MCF 10A (cell line): ENCODE measurements at regions of chr2 and their contacts with region 1.

Region 1: DNA sequence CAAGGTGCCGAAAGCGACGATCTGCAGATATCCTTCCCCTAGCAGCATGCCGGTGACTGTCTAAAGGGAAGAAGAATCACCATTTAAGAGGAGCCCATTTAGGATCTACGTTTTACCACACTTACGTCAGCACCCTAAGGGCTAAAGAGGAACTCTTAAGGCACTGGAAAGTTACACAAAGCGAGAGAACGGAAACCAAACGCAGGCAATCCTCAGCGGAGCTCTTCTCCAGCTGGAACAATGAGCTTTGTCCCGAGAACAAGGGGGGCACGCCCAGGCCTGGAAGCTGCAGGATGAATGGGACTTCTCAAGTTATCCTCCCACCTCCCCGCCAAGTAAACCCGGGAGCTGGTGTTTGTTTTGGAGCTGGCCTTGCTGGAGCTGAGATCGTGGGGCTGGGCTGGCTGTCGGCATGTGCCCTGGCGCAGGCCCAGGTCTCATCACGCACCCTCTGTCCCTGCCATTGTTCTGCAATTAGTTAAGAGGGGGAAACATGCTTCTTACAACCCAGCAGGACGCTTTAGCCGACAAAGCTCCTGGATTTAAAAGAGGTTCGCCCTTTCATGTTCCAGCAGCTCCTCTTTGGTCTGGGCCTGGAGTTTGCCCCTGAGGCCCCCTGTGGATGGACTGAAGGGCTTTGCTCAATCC is 36.4 kb downstream of the PXDN start:
- DNase-seq: peak; percentile 98
- H3K4me3 Mint-ChIP-seq: peak overlapping the region; percentile 73
- H3K27ac Mint-ChIP-seq: peak overlapping the region; percentile 96
- H3K4me1 Mint-ChIP-seq: peaks cover 18% of the 10 kb centered on the region
- H3K27me3 Mint-ChIP-seq: no peaks in the 10 kb centered on the region
- CTCF ChIP-seq: no peak

Region 2: GRCh38 chr2:1721706-1722646 is 14.1 kb after region 1 on chr2:
- CTCF ChIA-PET with region 1: interaction called, 11 read pairs
- POLR2A ChIA-PET with region 1: interaction called, 34 read pairs
- intact Hi-C with region 1: no loop called
- DNase-seq: peak; percentile 80
- H3K4me3 Mint-ChIP-seq: no peak overlapping the region
- H3K27ac Mint-ChIP-seq: no peak overlapping the region
- H3K4me1 Mint-ChIP-seq: peaks cover 29% of the 10 kb centered on the region
- H3K27me3 Mint-ChIP-seq: no peaks in the 10 kb centered on the region
- CTCF ChIP-seq: no peak

Region 3: GRCh38 chr2:1730015-1730927 is 22.4 kb after region 1 on chr2:
- CTCF ChIA-PET with region 1: interaction called, 7 read pairs
- POLR2A ChIA-PET with region 1: interaction called, 48 read pairs
- intact Hi-C with region 1: loop called (anchors 1 kb)
- DNase-seq: peak; percentile 70
- H3K4me3 Mint-ChIP-seq: peak overlapping the region; percentile 53
- H3K27ac Mint-ChIP-seq: peak overlapping the region; percentile 99
- H3K4me1 Mint-ChIP-seq: peaks cover 32% of the 10 kb centered on the region
- H3K27me3 Mint-ChIP-seq: no peaks in the 10 kb centered on the region
- CTCF ChIP-seq: no peak

Region 4: GRCh38 chr2:1742681-1743395 is 34.9 kb after region 1 on chr2:
- CTCF ChIA-PET with region 1: interaction called, 8 read pairs
- POLR2A ChIA-PET with region 1: interaction called, 12 read pairs
- intact Hi-C with region 1: loop called (anchors 5 kb)
- DNase-seq: peak; percentile 91
- H3K4me3 Mint-ChIP-seq: peak overlapping the region; percentile 79
- H3K27ac Mint-ChIP-seq: peak overlapping the region; percentile 90
- H3K4me1 Mint-ChIP-seq: peaks cover 7% of the 10 kb centered on the region
- H3K27me3 Mint-ChIP-seq: no peaks in the 10 kb centered on the region
- CTCF ChIP-seq: peak; percentile 66